Brain microvascular endothelial cell (primary cell): ENCODE measurements at regions of chr17 and their contacts with region 1.

Region 1: GRCh38 chr17:79991140-79991923 is 44.3 kb downstream of the TBC1D16 start:
- DNase-seq: peak; percentile 67
- H3K4me3 ChIP-seq: peak overlapping the region; percentile 48
- H3K27ac ChIP-seq: no peak overlapping the region
- H3K27me3 ChIP-seq: no peaks in the 10 kb centered on the region
- CTCF ChIP-seq: peak; percentile 71

Region 2: DNA sequence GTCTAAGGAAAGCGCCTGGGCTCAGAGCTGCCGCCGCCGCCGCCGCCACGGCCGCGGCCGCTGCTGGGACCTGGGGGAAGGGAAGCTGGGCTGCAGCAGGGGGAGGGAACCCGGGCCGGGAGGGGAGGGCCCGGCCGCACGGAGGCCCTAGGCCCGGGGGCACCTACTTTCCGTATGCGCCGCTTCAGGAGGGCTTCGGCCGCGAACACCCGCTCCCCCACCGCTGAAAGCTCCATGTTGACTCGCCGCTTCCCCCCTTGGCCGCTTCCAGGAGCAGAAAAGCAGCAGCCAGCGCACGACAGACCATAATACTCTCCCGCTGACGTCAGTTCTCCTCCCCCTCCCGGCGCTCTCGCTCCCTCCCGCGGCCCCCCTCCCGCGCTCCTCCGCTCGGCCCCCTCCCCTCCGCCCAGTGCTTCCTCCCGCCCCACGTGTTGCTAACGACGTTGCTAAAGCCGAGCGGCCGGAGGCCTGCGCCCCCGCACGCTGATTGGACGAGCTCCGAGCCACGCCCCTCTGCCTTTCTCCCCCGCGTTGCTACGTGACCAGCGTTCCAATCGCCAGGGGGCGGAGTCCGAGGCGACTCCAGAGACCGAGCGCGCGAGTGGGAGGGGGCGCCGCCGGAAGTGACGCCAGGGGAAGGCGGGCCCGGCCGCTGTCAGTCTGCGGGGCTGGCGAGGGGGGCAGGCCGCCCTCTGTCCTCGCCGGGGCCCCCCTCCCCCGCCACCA is 194.4 kb before region 1 on chr17 and contains the start of gene CBX8:
- in situ Hi-C with region 1: loop called (anchors 25 kb)
- DNase-seq: peak; percentile 98
- H3K4me3 ChIP-seq: peak within 1 kb of the TSS; percentile 81
- H3K27ac ChIP-seq: peak within 1 kb of the TSS; percentile 88
- H3K27me3 ChIP-seq: peaks cover 45% of the 10 kb centered on the region
- CTCF ChIP-seq: peak; percentile 4

Region 3: DNA sequence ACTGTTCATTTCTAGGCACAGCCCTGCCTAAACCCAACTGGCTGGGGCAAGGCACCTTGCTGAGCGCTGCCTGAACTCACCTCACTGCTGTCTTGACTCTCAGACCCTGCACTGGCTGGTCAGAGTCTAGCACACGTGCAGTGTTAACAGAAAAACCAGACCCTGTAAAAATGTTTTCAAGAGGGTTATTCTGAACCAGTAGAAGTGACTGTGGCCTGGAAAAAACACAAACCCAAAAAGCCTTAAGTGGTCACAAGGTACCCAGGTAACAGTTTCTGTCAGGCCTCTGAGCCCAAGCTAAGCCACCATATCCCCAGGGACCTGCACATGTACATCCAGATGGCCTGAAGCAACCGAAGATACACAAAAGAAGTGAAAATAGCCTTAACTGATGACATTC is 161.7 kb after region 1 on chr17:
- in situ Hi-C with region 1: no loop called
- DNase-seq: no peak
- H3K4me3 ChIP-seq: no peak overlapping the region
- H3K27ac ChIP-seq: no peak overlapping the region
- H3K27me3 ChIP-seq: no peaks in the 10 kb centered on the region
- CTCF ChIP-seq: no peak